Activated CD4-positive, alpha-beta T cell treated with anti-CD3 and anti-CD28 coated beads for 36 hours (primary cell): ENCODE measurements at regions of chr12 and their contacts with region 1.

Region 1: GRCh38 chr12:68175557-68176061 is 16.1 kb upstream of the IFNG start:
- DNase-seq: peak; percentile 78
- ATAC-seq: peak; percentile 84
- H3K4me3 Mint-ChIP-seq: peak overlapping the region; percentile 46
- H3K27ac Mint-ChIP-seq: peak overlapping the region; percentile 65
- H3K4me1 Mint-ChIP-seq: peaks cover 69% of the 10 kb centered on the region
- H3K27me3 Mint-ChIP-seq: no peaks in the 10 kb centered on the region

Region 2: DNA sequence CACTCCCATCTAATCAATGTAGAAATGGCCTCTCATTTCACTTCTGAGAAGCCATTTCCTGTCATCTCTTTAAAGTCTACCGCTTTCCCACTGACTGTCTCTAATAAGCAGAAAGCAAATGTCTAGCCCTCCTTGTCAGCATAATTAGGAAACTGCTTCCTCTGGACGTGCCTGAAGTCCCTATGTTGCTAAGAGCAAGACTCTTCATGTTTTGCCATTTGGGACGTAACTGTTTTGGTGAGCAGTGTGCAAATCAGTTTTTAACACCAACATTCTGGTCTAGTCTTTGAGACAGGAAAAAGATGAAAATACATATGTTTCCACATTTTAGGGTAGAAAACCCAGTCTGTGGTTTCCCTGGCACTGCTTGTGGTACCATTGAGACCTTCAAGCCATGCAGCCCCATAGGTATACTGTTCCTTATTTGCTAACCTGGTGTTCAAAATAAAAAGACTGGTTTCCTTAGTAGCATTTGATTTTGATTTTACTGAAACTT is 38.2 kb before region 1 on chr12:
- CTCF ChIA-PET with region 1: no interaction called
- POLR2A ChIA-PET with region 1: no interaction called
- intact Hi-C with region 1: loop called in 1 of 2 experiments (anchors 1 kb)
- DNase-seq: no peak
- ATAC-seq: peak; percentile 67
- H3K4me3 Mint-ChIP-seq: peak overlapping the region; percentile 13
- H3K27ac Mint-ChIP-seq: peak overlapping the region; percentile 74
- H3K4me1 Mint-ChIP-seq: peaks cover 48% of the 10 kb centered on the region
- H3K27me3 Mint-ChIP-seq: no peaks in the 10 kb centered on the region

Region 3: DNA sequence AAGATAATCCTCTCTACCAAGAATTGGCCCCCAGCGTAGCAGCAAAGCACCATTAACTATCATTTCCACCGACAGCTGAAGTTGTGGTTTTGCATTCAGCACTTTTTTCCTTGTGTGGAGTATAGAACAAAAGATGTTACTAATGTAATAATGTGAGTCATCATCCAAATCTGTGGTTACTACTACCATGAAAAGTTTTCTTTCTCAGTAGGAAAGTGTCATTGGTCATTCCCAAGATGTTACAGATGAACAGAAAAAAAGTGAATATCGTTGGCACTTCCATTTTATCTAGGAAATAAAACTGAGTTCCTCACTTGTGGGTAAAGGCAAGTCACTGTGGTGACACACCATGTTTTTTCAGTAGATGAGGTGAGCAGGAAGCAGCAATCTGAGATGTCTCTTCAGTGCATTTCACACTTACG is 14.2 kb after region 1 on chr12:
- CTCF ChIA-PET with region 1: interaction called, 9 read pairs
- POLR2A ChIA-PET with region 1: interaction called, 5 read pairs
- intact Hi-C with region 1: loop called in 1 of 2 experiments (anchors 2 kb)
- DNase-seq: peak; percentile 61
- ATAC-seq: peak; percentile 89
- H3K4me3 Mint-ChIP-seq: no peak overlapping the region
- H3K27ac Mint-ChIP-seq: peak overlapping the region; percentile 24
- H3K4me1 Mint-ChIP-seq: peaks cover 11% of the 10 kb centered on the region
- H3K27me3 Mint-ChIP-seq: peaks cover 13% of the 10 kb centered on the region

Region 4: GRCh38 chr12:68414988-68415387 is 239.4 kb after region 1 on chr12:
- CTCF ChIA-PET with region 1: no interaction called
- POLR2A ChIA-PET with region 1: no interaction called
- intact Hi-C with region 1: no loop called
- DNase-seq: no peak
- ATAC-seq: no peak
- H3K4me3 Mint-ChIP-seq: no peak overlapping the region
- H3K27ac Mint-ChIP-seq: no peak overlapping the region
- H3K4me1 Mint-ChIP-seq: peaks cover 9% of the 10 kb centered on the region
- H3K27me3 Mint-ChIP-seq: no peaks in the 10 kb centered on the region